Posterior vena cava (tissue), 2 donors: ENCODE measurements at regions of chr1 and their contacts with region 1.

Region 1: GRCh38 chr1:170853302-170853701 is 82.0 kb upstream of the MROH9 start:
- DNase-seq: no peak

Region 2: DNA sequence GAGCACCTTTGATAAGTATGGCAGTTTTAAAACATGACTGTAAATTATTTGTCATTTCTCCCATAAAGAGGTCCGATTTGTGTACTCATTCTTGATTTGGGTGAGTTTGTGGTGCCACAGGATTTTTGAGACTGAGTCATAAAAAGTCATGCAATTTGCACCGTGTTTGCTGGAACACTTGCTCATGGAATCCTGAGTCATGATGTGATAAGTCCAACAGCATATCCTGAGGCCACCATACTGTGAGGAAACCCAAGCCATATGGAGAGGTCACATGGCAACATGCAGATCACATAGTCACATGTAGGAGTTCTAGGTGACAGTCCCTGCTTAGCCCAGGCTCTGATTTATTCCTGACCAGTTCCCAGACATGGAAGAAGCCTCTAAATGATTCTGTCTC is 230.1 kb before region 1 on chr1:
- intact Hi-C with region 1: no loop called
- DNase-seq: no peak

Region 3: GRCh38 chr1:172682812-172683211 is 1829.5 kb after region 1 on chr1:
- intact Hi-C with region 1: loop called in 1 of 2 experiments (anchors 10 kb)
- DNase-seq: no peak